ENCODE measurements at regions of chr15 and their contacts with region 1.

Region 1: GRCh38 chr15:75675579-75676404 is 28.1 kb downstream of the SNX33 start:
- DNase-seq: no peak
- H3K4me3 ChIP-seq: no peak overlapping the region
- H3K27ac ChIP-seq: no peak overlapping the region
- H3K4me1 ChIP-seq: peaks cover 11% of the 10 kb centered on the region
- H3K27me3 ChIP-seq: no peaks in the 10 kb centered on the region
- CTCF ChIP-seq: no peak

Region 2: DNA sequence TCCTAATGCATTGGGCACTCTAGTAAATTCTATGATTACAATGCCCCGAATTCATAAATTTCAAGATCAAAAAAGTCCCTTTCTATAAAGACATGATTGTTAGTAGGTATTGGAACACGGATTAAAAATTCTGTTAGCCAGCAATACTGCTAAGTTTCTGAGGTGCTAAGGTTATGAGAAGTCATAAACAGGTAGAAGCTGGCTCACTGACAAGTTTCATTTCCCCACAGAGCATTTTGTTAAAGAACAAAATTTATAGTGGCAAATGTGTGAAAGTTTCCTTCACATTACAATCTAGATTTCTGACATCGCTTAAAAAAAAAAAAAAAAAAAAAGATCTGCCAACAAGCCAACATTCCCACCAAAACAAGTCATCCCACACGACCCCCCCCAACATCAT is 295.0 kb before region 1 on chr15:
- CTCF ChIA-PET with region 1: no interaction called
- dilution Hi-C with region 1: loop called (anchors 5 kb)
- in situ Hi-C with region 1: no loop called
- intact Hi-C with region 1: no loop called
- DNase-seq: no peak
- H3K4me3 ChIP-seq: no peak overlapping the region
- H3K27ac ChIP-seq: no peak overlapping the region
- H3K4me1 ChIP-seq: no peaks in the 10 kb centered on the region
- H3K27me3 ChIP-seq: no peaks in the 10 kb centered on the region
- CTCF ChIP-seq: no peak

Region 3: DNA sequence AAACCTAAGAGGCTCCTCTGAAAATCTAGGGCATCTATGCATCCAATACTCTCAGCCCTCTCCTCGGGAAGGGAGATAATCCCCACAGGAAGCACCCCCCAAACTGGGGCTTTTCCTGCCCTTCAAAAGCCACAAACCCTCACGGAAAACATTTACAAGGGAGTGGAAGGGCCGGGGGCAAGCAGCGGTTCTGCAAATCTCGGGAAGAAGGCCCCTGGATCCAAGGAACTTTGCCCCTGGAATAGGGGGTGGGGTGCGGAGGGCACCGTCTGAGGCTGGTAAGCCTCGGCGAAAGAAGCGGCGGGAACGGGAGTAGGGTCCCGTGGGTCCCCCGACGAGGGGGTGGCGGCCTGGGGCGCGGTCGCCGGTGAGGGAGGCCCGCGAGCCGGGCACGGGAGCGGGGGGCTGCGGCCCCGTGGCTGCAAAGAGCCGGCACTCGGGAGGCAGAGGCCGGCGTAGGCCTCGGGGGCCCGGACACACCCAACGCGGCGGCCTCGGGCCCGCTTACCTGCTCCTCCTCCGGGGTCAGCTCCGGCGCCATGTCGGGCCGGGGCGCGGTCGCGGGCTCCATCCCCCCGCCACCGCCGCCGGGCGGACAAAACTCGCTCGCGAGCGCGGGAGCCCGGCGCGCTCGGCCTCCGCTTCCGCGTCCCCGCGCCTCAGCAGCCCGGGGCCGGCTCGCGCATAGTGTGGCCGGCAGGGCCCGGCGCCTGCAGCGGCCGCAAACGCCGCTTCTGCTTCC is 97.4 kb before region 1 on chr15:
- CTCF ChIA-PET with region 1: no interaction called
- dilution Hi-C with region 1: no loop called
- in situ Hi-C with region 1: no loop called
- intact Hi-C with region 1: no loop called
- DNase-seq: peak; percentile 14
- H3K4me3 ChIP-seq: peak overlapping the region; percentile 72 to 94 (median 76)
- H3K27ac ChIP-seq: peak overlapping the region; percentile 78
- H3K4me1 ChIP-seq: peaks cover 4% of the 10 kb centered on the region
- H3K27me3 ChIP-seq: no peaks in the 10 kb centered on the region
- CTCF ChIP-seq: no peak

Region 4: GRCh38 chr15:75597667-75598341 is 78.0 kb before region 1 on chr15:
- CTCF ChIA-PET with region 1: no interaction called
- dilution Hi-C with region 1: loop called (anchors 5 kb)
- in situ Hi-C with region 1: no loop called
- intact Hi-C with region 1: no loop called
- DNase-seq: no peak
- H3K4me3 ChIP-seq: no peak overlapping the region
- H3K27ac ChIP-seq: no peak overlapping the region
- H3K4me1 ChIP-seq: no peaks in the 10 kb centered on the region
- H3K27me3 ChIP-seq: no peaks in the 10 kb centered on the region
- CTCF ChIP-seq: peak; percentile 28 to 43

Region 5: GRCh38 chr15:75712668-75713337 is 37.0 kb after region 1 on chr15 and contains the start of gene CSPG4:
- CTCF ChIA-PET with region 1: no interaction called
- dilution Hi-C with region 1: no loop called
- in situ Hi-C with region 1: no loop called
- intact Hi-C with region 1: no loop called
- DNase-seq: no peak
- H3K4me3 ChIP-seq: peak within 1 kb of the TSS; percentile 54 to 64 (median 56)
- H3K27ac ChIP-seq: no peak within 1 kb of the TSS
- H3K4me1 ChIP-seq: peaks cover 15% of the 10 kb centered on the region
- H3K27me3 ChIP-seq: no peaks in the 10 kb centered on the region
- CTCF ChIP-seq: no peak
- total RNA-seq, gene CSPG4: 3.6 to 28.5 TPM

Region 6: GRCh38 chr15:75758071-75758872 is 82.5 kb after region 1 on chr15:
- CTCF ChIA-PET with region 1: no interaction called
- dilution Hi-C with region 1: loop called (anchors 5 kb)
- in situ Hi-C with region 1: no loop called
- intact Hi-C with region 1: no loop called
- DNase-seq: peak; percentile 70
- H3K4me3 ChIP-seq: peak overlapping the region; percentile 45 to 69 (median 56)
- H3K27ac ChIP-seq: no peak overlapping the region
- H3K4me1 ChIP-seq: peaks cover 10% of the 10 kb centered on the region
- H3K27me3 ChIP-seq: no peaks in the 10 kb centered on the region
- CTCF ChIP-seq: peak; percentile 13 to 41